HCT116 (cell line): ENCODE measurements at regions of chr19 and their contacts with region 1.

Region 1: GRCh38 chr19:10717356-10718204 is at the start of gene DNM2:
- DNase-seq: peak; percentile 100
- ATAC-seq: peak; percentile 90
- H3K4me3 ChIP-seq: peak within 1 kb of the TSS; percentile 89 to 90
- H3K27ac ChIP-seq: peak within 1 kb of the TSS; percentile 92
- H3K4me1 ChIP-seq: peaks cover 7 to 14% of the 10 kb centered on the region in 2 experiments; a peak in 3 of 4 replicates
- H3K27me3 ChIP-seq: no peaks in the 10 kb centered on the region
- CTCF ChIP-seq: peak; percentile 77 to 95 (median 84)
- POLR2A ChIP-seq: peak; percentile 59
- RAD21 ChIP-seq: peak; percentile 98
- total RNA-seq, gene DNM2: 183 TPM

Region 2: DNA sequence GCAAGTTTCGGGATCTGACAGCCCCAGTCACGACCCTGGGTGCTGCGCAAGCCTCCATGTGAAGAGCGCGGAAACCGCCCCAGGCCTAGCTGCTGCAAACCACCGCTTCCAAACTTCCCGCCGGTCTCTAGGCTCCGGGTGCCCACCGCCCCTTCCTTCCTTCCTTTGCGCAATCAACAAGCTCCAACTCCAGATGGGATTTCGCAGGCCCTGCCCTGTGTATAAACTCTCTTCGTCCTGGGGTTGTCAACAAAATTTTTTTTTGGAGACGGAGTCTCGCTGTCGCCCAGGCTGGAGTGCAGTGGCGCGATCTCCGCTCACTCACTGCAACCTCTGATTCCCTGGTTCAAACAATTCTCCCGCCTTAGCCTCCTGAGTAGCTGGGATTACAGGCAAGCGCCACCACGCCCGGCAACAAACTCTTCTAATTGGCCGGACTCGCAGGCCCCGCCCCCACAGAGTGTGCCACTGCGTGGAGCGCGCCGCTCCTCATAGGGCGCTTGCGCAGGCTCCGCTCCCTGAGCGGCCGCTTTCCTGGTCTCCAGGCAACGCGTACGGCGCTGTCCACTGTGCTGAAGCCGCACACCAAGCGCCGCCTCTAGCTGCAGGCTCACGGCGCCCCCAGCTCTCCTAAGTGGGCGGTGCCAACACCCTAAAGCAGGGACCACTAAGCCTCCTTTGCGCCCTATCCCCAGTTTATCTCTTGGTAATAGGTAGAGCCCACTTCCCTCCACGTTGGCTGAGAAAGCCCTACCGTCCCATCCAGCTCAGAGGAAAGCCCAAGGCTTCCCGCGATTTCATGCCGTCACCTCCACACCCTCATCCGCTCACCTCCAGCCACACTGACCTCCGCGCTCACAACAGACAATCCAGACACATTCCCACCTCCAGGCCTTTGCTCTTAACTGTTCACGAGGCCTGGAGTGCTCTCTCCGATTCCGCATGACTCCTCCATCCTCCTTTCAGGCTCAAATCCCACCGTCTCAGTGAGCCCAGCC is 21.9 kb before region 1 on chr19:
- CTCF ChIA-PET with region 1: interaction called, 43 read pairs
- POLR2A ChIA-PET with region 1: no interaction called
- RAD21 ChIA-PET with region 1: no interaction called
- intact Hi-C with region 1: no loop called
- DNase-seq: peak; percentile 86
- ATAC-seq: peak; percentile 96
- H3K4me3 ChIP-seq: no peak overlapping the region
- H3K27ac ChIP-seq: peak overlapping the region; percentile 22; the same call in 1 of the 2 replicates
- H3K4me1 ChIP-seq: peaks cover 3 to 16% of the 10 kb centered on the region in 2 experiments; a peak in 3 of 4 replicates
- H3K27me3 ChIP-seq: no peaks in the 10 kb centered on the region
- CTCF ChIP-seq: no peak
- POLR2A ChIP-seq: no peak
- RAD21 ChIP-seq: no peak

Region 3: DNA sequence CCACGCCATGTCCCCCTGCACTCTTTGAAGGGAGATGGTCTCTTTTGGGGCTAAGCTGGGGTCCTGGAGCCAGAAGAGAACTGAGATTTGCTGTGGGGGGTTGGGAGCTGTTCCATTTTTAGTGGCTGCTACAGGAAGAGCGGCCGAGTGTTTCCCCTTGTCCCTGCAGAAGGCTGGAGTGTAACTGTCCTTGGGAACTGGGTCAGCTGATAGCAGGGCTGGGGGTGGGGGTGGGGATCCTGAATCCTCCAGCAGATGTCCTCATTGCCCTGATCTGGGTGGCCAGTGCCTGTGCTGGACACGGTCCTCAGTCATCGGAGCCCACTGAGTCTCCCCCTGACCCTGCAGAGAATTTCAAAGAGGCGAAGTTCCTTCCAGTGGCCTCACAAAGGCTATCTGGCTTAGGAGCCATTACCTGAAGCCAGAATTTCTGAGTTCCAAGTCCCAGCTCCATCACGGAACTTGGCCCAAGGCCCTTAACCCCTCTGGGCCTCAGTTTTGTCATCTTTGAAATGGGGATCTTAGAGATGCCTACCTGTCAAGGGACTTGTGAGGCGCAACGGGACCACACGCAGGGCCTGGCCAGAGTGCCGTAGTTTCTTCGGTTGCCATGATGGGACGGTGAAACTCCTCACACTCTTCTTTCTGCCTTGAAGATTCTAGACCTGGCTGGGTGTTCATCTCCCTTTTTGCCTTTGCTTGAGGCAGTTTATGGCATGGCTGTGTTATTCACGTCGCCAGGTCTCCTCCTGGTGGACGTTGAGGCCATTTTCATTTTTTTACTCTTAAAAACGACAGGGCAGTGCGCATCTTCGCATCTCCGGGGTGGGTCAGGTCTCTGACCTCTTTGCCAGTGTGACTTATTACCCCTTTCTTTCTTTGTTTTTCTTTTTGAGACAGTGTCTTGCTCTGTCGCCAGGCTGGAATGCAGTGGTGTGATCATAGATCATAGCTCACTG is 52.2 kb after region 1 on chr19:
- CTCF ChIA-PET with region 1: interaction called, 9 read pairs
- POLR2A ChIA-PET with region 1: no interaction called
- RAD21 ChIA-PET with region 1: no interaction called
- intact Hi-C with region 1: loop called (anchors 1 kb)
- DNase-seq: no peak
- ATAC-seq: peak; percentile 56
- H3K4me3 ChIP-seq: no peak overlapping the region
- H3K27ac ChIP-seq: no peak overlapping the region
- H3K4me1 ChIP-seq: peaks cover 16 to 28% of the 10 kb centered on the region in 2 experiments
- H3K27me3 ChIP-seq: no peaks in the 10 kb centered on the region
- CTCF ChIP-seq: peak in 2 of 3 experiments; percentile 13 to 26; a peak in 1 of 6 replicates
- POLR2A ChIP-seq: no peak
- RAD21 ChIP-seq: peak; percentile 65

Region 4: DNA sequence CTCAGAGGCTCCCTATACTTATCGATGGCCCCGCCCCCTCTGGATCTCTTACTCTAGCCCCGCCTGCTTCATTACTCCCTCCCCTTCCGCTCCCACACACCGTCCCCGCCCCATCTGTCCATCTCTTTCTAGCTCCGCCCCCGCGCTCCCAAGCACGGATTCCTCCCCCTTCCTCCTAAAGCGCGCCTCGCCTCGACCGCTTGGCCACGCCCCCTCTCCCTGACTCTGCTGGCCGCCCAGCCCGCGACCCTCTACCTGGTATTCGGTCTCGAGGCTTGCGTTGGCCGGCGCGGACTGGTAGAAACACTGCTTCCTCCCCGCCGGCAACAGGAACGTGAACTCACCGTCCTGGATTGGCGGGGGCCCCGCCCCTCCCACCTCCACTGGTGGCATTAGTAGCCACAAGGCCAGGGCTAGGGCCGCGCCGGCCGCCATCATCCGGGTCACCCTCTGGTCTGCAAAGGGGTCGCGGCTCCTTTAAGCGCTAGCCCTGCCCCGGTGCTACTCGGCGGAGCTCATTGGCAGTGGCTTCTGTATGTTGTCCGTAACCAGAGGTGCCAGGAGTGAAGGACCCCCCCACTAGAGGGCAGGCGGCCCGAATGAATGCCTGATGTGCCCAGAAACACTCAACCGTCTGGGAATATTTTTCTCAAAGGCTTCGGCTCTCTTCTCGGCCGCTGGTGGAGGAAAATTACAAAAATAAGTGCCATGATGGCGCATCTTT is 118.3 kb after region 1 on chr19 and contains the start of gene TMED1:
- CTCF ChIA-PET with region 1: interaction called, 27 read pairs
- POLR2A ChIA-PET with region 1: interaction called, 12 read pairs
- RAD21 ChIA-PET with region 1: interaction called, 3 to 5 read pairs
- intact Hi-C with region 1: loop called (anchors 2 kb)
- DNase-seq: peak; percentile 99
- ATAC-seq: peak; percentile 87
- H3K4me3 ChIP-seq: peak within 1 kb of the TSS; percentile 72 to 83
- H3K27ac ChIP-seq: peak within 1 kb of the TSS; percentile 94
- H3K4me1 ChIP-seq: peaks cover 10 to 22% of the 10 kb centered on the region in 2 experiments; a peak in 3 of 4 replicates
- H3K27me3 ChIP-seq: no peaks in the 10 kb centered on the region
- CTCF ChIP-seq: peak in 2 of 3 experiments; percentile 25 to 32; a peak in 5 of 6 replicates
- POLR2A ChIP-seq: no peak
- RAD21 ChIP-seq: peak; percentile 34
- total RNA-seq, gene TMED1: 26.3 TPM

Region 5: DNA sequence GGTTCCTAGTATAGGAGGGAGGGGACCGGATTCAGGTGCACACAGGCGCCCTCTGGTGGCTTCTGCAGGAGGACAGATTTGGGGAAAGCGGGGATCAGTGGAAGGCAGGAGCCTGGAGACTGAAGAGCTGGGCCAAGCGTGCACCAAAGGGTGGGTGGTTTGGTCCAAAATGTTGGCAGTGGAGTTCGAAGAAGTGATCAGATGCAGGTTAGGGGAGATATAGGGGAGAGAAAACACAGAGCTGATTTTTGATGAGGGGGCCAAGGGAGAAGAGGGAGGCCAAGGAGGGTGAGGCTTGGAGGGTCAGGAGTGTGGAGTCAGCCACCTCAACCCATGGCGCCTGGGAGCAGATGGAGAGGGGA is 146.9 kb after region 1 on chr19:
- CTCF ChIA-PET with region 1: interaction called, 42 read pairs
- POLR2A ChIA-PET with region 1: interaction called, 14 read pairs
- RAD21 ChIA-PET with region 1: interaction called in 1 of 2 experiments, 7 read pairs
- intact Hi-C with region 1: loop called (anchors 1 kb)
- DNase-seq: peak; percentile 56
- ATAC-seq: peak; percentile 94
- H3K4me3 ChIP-seq: 0 out of 4 replicates have a peak overlapping the region, but pooled peaks of 1 of the 2 experiments have one; percentile 14
- H3K27ac ChIP-seq: no peak overlapping the region
- H3K4me1 ChIP-seq: peaks cover 3 to 19% of the 10 kb centered on the region in 2 experiments; a peak in 3 of 4 replicates
- H3K27me3 ChIP-seq: no peaks in the 10 kb centered on the region
- CTCF ChIP-seq: peak; percentile 89 to 96 (median 95)
- POLR2A ChIP-seq: no peak
- RAD21 ChIP-seq: peak; percentile 71